GM12878 (cell line): ENCODE measurements at regions of chr16 and their contacts with region 1.

Region 1: GRCh38 chr16:2905431-2906387 is 6.0 kb upstream of the FLYWCH1 start:
- DNase-seq: peak; percentile 94
- ATAC-seq: peak; percentile 91
- H3K4me3 ChIP-seq: peak overlapping the region; percentile 75
- H3K27ac ChIP-seq: no peak overlapping the region
- H3K4me1 ChIP-seq: peaks cover 6% of the 10 kb centered on the region
- H3K27me3 ChIP-seq: no peaks in the 10 kb centered on the region
- CTCF ChIP-seq: no peak
- EP300 ChIP-seq: no peak
- POLR2A ChIP-seq: no peak
- RAD21 ChIP-seq: no peak

Region 2: DNA sequence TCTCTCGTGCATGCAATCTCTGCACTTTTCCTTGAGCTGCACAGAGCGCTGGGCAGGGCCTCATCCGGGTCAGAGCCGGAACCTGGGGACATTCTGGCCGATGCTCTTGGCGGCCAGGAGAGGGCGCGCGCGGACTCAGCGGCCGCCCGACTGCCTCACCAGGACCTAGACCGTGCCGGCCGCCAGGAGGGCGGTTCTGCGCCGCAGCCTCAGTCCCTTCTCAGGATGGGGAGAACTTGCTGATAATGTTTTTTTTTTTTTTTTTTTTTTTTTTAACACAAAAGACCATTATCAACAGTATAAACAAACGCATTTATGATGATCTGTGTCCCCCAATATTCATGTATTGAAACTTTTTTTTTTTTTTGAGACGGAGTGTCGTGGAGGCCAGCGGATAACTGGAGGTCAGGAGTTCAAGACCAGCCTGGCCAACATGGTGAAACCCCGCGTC is 30.8 kb before region 1 on chr16:
- CTCF ChIA-PET with region 1: interaction called, 30 read pairs
- POLR2A ChIA-PET with region 1: interaction called, 5 read pairs
- RAD21 ChIA-PET with region 1: interaction called, 6 read pairs
- SMC1A ChIA-PET with region 1: interaction called, 11 read pairs
- in situ Hi-C with region 1: loop called (anchors 5 kb)
- intact Hi-C with region 1: loop called (anchors 2 kb)
- DNase-seq: peak; percentile 3
- ATAC-seq: peak; percentile 100
- H3K4me3 ChIP-seq: no peak overlapping the region
- H3K27ac ChIP-seq: no peak overlapping the region
- H3K4me1 ChIP-seq: no peaks in the 10 kb centered on the region
- H3K27me3 ChIP-seq: no peaks in the 10 kb centered on the region; a peak in 1 of 4 replicates
- CTCF ChIP-seq: peak; percentile 95 to 98 (median 97)
- EP300 ChIP-seq: no peak
- POLR2A ChIP-seq: no peak
- RAD21 ChIP-seq: peak; percentile 52

Region 3: GRCh38 chr16:2883027-2883851 is 22.5 kb before region 1 on chr16 and contains the start of gene FLYWCH2:
- CTCF ChIA-PET with region 1: interaction called, 11 read pairs
- POLR2A ChIA-PET with region 1: interaction called, 12 read pairs
- RAD21 ChIA-PET with region 1: interaction called, 19 read pairs
- SMC1A ChIA-PET with region 1: interaction called, 5 read pairs
- in situ Hi-C with region 1: loop called (anchors 5 kb)
- intact Hi-C with region 1: loop called (anchors 2 kb)
- DNase-seq: peak; percentile 90
- ATAC-seq: peak; percentile 89
- H3K4me3 ChIP-seq: peak within 1 kb of the TSS; percentile 90
- H3K27ac ChIP-seq: peak within 1 kb of the TSS; percentile 69
- H3K4me1 ChIP-seq: peaks cover 8% of the 10 kb centered on the region
- H3K27me3 ChIP-seq: no peaks in the 10 kb centered on the region
- CTCF ChIP-seq: peak in 1 of 3 experiments; percentile 8; a peak in 1 of 6 replicates
- EP300 ChIP-seq: no peak
- POLR2A ChIP-seq: peak; percentile 93
- RAD21 ChIP-seq: no peak
- polyA plus RNA-seq, gene FLYWCH2: 0.27 to 1.8 TPM

Region 4: GRCh38 chr16:2919511-2920255 is 14.0 kb after region 1 on chr16:
- CTCF ChIA-PET with region 1: interaction called, 29 read pairs
- POLR2A ChIA-PET with region 1: interaction called, 3 read pairs
- RAD21 ChIA-PET with region 1: interaction called, 8 read pairs
- SMC1A ChIA-PET with region 1: interaction called, 5 read pairs
- in situ Hi-C with region 1: no loop called
- intact Hi-C with region 1: loop called (anchors 2 kb)
- DNase-seq: no peak
- ATAC-seq: peak; percentile 70
- H3K4me3 ChIP-seq: no peak overlapping the region
- H3K27ac ChIP-seq: no peak overlapping the region
- H3K4me1 ChIP-seq: no peaks in the 10 kb centered on the region
- H3K27me3 ChIP-seq: no peaks in the 10 kb centered on the region
- CTCF ChIP-seq: peak; percentile 75 to 93 (median 91)
- EP300 ChIP-seq: no peak
- POLR2A ChIP-seq: no peak
- RAD21 ChIP-seq: peak; percentile 78

Region 5: GRCh38 chr16:2968738-2969544 is 63.2 kb after region 1 on chr16 and contains the start of gene PAQR4:
- CTCF ChIA-PET with region 1: no interaction called
- POLR2A ChIA-PET with region 1: interaction called, 8 read pairs
- RAD21 ChIA-PET with region 1: interaction called, 3 read pairs
- SMC1A ChIA-PET with region 1: interaction called, 3 read pairs
- in situ Hi-C with region 1: no loop called
- intact Hi-C with region 1: loop called (anchors 2 kb)
- DNase-seq: peak; percentile 72
- ATAC-seq: peak; percentile 76
- H3K4me3 ChIP-seq: peak within 1 kb of the TSS; percentile 91
- H3K27ac ChIP-seq: peak within 1 kb of the TSS; percentile 78
- H3K4me1 ChIP-seq: peaks cover 26% of the 10 kb centered on the region
- H3K27me3 ChIP-seq: no peaks in the 10 kb centered on the region
- CTCF ChIP-seq: no peak
- EP300 ChIP-seq: 0 out of 4 replicates have a peak, but pooled peaks of 1 of the 2 experiments have one; percentile 7
- POLR2A ChIP-seq: 0 out of 2 replicates have a peak, but pooled peaks have one; percentile 20
- RAD21 ChIP-seq: no peak
- polyA plus RNA-seq, gene PAQR4: 0.39 to 0.84 TPM

Region 6: DNA sequence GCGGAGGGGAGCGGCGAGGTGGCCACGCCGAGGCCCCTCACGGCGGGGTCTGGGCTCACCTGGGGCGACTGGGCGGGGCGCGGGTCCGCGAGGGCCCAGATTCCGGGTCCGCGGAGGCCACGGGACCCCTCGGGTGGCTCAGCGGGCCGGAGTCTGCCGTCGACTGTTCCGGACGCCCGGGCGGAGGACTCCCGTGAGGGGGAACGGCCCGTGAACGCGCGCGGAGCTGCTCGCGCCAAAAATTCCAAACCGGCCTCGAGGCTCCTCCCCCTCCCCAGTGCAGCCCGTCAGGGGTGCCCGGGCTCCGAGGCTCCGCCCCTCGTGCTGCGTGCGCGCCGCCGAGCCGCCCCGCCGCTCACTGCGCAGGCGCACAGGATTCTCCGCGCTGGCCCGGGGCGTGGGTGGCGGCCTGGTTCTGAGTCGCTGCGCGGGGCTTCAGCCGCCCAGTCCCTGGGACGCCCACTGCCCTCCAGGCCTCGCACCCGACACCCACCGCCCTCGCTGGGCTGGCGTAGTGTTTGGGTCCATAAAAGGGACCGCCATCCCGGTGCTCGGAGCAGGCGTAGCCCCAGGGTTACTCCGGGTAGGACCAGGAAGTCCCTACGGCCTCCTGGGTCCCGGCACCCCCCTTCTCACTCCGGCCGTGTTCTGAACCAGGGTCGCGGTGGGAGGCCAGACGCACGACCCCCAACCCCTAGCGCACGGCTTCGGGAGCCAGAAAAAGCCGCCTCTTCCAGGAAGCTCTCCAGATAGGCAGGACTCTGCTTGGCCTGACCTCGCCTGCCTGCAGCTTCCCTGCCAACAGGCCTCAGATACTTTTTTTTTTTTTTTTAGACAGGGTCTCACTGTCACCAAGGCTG is 74.7 kb after region 1 on chr16 and contains the start of gene PKMYT1:
- CTCF ChIA-PET with region 1: interaction called, 6 read pairs
- POLR2A ChIA-PET with region 1: interaction called, 4 read pairs
- RAD21 ChIA-PET with region 1: no interaction called
- SMC1A ChIA-PET with region 1: interaction called, 4 read pairs
- in situ Hi-C with region 1: no loop called
- intact Hi-C with region 1: loop called (anchors 5 kb)
- DNase-seq: peak; percentile 61
- ATAC-seq: peak; percentile 89
- H3K4me3 ChIP-seq: peak within 1 kb of the TSS; percentile 74
- H3K27ac ChIP-seq: peak within 1 kb of the TSS; percentile 88
- H3K4me1 ChIP-seq: peaks cover 7% of the 10 kb centered on the region
- H3K27me3 ChIP-seq: no peaks in the 10 kb centered on the region
- CTCF ChIP-seq: no peak
- EP300 ChIP-seq: no peak
- POLR2A ChIP-seq: peak; percentile 98
- RAD21 ChIP-seq: no peak
- polyA plus RNA-seq, gene PKMYT1: 4.6 to 20.2 TPM